ENCODE measurements at regions of chr2 and their contacts with region 1.

Region 1: DNA sequence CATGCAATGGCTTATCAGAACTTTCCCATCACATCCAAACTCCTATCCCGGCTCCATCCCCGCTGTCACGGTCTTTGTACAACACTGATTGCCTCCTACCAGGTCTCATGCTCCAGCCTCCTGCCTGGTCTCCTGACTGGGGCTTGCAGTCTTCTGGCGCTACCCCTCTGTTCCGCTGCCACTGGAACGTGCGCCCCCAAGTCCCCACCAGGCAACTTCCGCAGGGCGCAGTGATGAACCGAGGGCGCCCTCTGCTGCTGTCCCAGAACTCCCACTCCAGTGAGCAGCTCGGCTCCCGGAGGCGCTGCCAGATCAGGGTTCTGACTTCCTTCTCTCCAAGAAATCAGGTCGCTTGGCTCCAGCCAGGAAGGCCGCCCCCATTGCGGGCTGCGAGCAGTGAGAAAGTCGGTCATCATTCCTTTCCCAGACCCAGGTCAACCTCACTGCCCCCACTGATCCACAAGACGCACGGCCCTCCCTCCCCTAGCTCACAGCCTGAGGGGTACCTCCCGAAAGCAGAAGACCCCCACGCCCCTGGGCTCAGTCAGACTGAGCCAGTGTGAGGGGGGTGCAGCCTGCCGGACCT is 43.9 kb upstream of the RAB11FIP5 start:
- ATAC-seq: peak; percentile 54 to 99 (median 78)
- H3K4me3 ChIP-seq: no peak overlapping the region
- H3K27ac ChIP-seq: no peak overlapping the region
- H3K4me1 ChIP-seq: no peaks in the 10 kb centered on the region

Region 2: GRCh38 chr2:72722492-72723070 is 434.1 kb before region 1 on chr2:
- in situ Hi-C with region 1: no loop called
- ATAC-seq: peak in 2 of 8 experiments; percentile 37 to 51
- H3K4me3 ChIP-seq: no peak overlapping the region
- H3K27ac ChIP-seq: no peak overlapping the region
- H3K4me1 ChIP-seq: no peaks in the 10 kb centered on the region

Region 3: DNA sequence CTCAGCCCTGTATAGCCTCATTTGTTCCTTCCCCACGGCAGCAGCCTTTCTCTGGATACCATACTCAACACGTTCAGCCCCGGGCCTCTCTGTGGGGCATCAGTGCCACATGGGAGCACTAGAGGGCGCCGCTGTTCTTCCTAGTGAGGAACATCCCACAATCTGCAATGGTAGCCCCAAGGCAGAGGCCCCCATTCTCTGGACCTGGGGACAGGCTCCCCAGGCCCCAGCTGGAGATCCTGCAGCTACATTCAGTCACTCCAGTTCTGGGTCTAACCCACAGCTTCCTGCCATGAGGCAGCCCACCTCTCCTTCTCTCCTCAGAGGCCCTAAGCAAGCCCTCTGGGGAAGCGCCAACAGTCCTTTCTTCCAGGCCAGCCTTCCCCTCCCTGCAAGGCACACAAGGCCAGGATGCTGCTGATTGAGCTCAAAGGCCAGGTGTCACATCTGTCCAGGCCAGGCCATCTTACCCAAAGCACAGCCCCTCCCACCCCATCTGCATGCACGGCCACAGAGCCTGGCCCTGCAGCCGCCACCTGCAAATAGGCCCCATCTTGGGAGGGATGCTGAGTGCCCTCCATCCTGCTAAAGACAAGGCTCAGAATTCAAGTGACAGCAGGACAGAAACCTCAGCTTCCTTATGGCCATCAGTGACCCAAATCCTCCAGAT is 70.8 kb before region 1 on chr2:
- in situ Hi-C with region 1: loop called in 4 of 9 experiments (anchors 10 kb)
- ATAC-seq: peak; percentile 61 to 93 (median 70)
- H3K4me3 ChIP-seq: no peak overlapping the region
- H3K27ac ChIP-seq: no peak overlapping the region
- H3K4me1 ChIP-seq: peaks cover 0 to 12% of the 10 kb centered on the region in 2 donors

Measured in motor neuron (in vitro differentiated cells).